ENCODE measurements at regions of chr4 and their contacts with region 1.

Region 1: DNA sequence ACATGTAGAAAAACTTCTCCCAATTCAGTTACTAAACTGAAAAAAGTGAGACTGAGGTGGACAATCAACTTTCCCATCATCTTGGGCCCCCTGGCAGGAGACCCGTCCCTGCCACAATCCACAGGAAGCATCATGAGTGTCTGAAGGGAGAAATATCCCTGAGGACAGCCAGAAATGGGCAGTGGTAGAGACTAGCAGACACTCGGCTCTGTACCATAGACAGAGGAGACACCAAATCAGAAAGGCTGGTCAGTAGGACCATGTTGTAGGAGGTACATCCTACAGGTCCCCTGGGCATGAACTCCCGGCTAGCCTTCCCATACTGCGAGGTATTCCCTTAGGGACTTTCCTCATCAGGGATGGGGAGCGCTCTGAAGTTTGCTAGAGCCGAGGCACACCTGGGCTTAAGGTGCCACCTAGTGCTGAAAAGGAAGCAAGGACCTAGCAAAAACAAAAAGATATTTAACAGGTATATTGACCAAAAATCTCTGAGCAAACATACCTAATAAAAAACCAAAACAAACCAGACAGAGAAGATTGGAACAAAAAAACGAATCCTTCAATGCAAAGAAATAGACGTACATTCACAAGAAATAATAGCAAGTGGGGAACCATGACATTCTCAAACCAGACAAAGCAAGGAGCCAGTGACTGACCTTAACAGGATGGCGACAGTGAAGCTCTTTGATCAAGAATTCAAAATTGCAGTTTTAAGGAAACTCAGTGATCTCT is 55.6 kb downstream of the HAUS3 start:
- DNase-seq: peak; percentile 24
- H3K4me3 ChIP-seq: no peak overlapping the region
- H3K27ac ChIP-seq: no peak overlapping the region
- H3K4me1 ChIP-seq: no peaks in the 10 kb centered on the region
- H3K27me3 ChIP-seq: no peaks in the 10 kb centered on the region
- CTCF ChIP-seq: peak; percentile 24 to 58 (median 46)
- EP300 ChIP-seq: no peak
- POLR2A ChIP-seq: no peak

Region 2: DNA sequence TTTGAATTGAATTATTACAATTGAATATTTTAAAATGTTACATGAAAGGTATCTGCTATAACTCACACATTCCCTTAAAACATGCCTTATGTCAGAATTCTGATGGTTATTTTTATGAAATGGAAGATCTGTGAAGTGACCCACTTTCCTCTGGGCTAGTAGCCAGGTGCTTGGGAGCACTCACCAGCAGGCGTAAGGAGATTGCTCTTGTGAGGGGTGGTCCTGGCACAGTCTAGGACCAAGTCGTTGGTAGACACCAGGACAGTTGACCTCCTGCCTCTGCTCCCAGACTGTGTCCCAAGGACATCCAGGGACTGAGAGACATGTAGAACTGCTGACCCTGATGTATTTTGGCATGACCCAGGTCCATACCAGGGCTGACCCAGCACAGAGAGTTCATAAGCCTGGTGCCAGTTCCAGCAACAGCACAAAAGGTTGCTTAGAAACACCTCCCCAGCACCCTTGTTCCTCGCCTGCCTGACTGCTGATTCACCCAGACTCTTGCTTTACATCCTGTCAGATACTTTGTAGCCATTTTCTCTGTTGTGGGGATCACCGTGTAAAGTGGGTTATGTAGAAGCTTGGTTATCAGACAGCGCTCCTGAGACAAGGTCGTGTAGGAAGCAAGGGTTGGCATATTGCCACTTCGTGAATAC is 226.0 kb before region 1 on chr4:
- in situ Hi-C with region 1: loop called in 1 of 4 experiments (anchors 25 kb)
- intact Hi-C with region 1: no loop called
- DNase-seq: no peak
- H3K4me3 ChIP-seq: no peak overlapping the region
- H3K27ac ChIP-seq: no peak overlapping the region
- H3K4me1 ChIP-seq: no peaks in the 10 kb centered on the region
- H3K27me3 ChIP-seq: no peaks in the 10 kb centered on the region
- CTCF ChIP-seq: no peak
- EP300 ChIP-seq: no peak
- POLR2A ChIP-seq: no peak

Region 3: DNA sequence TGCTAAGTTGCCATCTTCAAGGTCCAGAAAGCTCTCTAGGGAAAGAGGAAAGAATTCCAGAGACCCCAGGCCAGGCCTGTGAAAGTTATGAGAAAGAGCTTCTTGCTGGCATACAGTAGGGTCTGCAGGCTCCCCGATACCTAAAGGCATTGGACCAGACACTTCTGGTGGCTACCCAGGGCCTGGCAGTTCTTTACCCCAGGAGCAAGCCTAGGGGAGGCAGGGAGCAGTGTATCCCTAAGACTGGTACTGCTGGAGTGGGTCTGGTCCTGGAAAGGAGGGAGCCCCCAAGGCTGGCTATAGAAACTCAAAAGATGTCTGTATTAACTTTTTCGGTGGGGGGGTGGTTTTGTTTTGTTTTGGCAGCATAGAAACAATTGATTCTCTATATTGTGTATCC is 330.3 kb after region 1 on chr4:
- in situ Hi-C with region 1: no loop called
- intact Hi-C with region 1: no loop called
- DNase-seq: no peak
- H3K4me3 ChIP-seq: no peak overlapping the region
- H3K27ac ChIP-seq: no peak overlapping the region
- H3K4me1 ChIP-seq: no peaks in the 10 kb centered on the region
- H3K27me3 ChIP-seq: no peaks in the 10 kb centered on the region
- CTCF ChIP-seq: no peak
- EP300 ChIP-seq: no peak
- POLR2A ChIP-seq: no peak